Heart right ventricle (tissue), 16 donors: ENCODE measurements at regions of chr15 and their contacts with region 1.

Region 1: GRCh38 chr15:35519541-35520149 is 26.3 kb downstream of the DPH6 start:
- DNase-seq: peak in 1 of 2 donors; percentile 13
- ATAC-seq: peak in 5 of 8 donors; percentile 66 to 80 (median 72)
- H3K4me3 ChIP-seq: no peak overlapping the region
- H3K27ac ChIP-seq: no peak overlapping the region
- H3K4me1 ChIP-seq: peaks cover 0 to 29% (median 10%) of the 10 kb centered on the region in 9 donors
- H3K27me3 ChIP-seq: no peaks in the 10 kb centered on the region
- CTCF ChIP-seq: peak in 8 of 9 donors; percentile 56 to 86 (median 69)

Region 2: GRCh38 chr15:35206060-35206675 is 313.5 kb before region 1 on chr15:
- intact Hi-C with region 1: no loop called
- DNase-seq: no peak
- ATAC-seq: no peak
- H3K4me3 ChIP-seq: no peak overlapping the region
- H3K27ac ChIP-seq: no peak overlapping the region
- H3K4me1 ChIP-seq: peaks cover 0 to 8% (median 0%) of the 10 kb centered on the region in 9 donors
- H3K27me3 ChIP-seq: no peaks in the 10 kb centered on the region
- CTCF ChIP-seq: peak in 2 of 9 donors; percentile 25 to 27

Region 3: GRCh38 chr15:35674873-35675781 is 155.5 kb after region 1 on chr15:
- intact Hi-C with region 1: loop called in 1 of 10 experiments (anchors 5 kb)
- DNase-seq: peak in 1 of 2 donors; percentile 29
- ATAC-seq: peak in 4 of 8 donors; percentile 18 to 43 (median 30)
- H3K4me3 ChIP-seq: no peak overlapping the region
- H3K27ac ChIP-seq: peak overlapping the region; percentile 8 to 82 (median 49)
- H3K4me1 ChIP-seq: peaks cover 0 to 59% (median 41%) of the 10 kb centered on the region in 9 donors
- H3K27me3 ChIP-seq: no peaks in the 10 kb centered on the region
- CTCF ChIP-seq: no peak

Region 4: GRCh38 chr15:35697549-35698299 is 178.1 kb after region 1 on chr15:
- intact Hi-C with region 1: loop called in 1 of 10 experiments (anchors 10 kb)
- DNase-seq: no peak
- ATAC-seq: peak; percentile 26 to 89 (median 72)
- H3K4me3 ChIP-seq: no peak overlapping the region
- H3K27ac ChIP-seq: peak overlapping the region; percentile 2 to 76 (median 52)
- H3K4me1 ChIP-seq: peaks cover 1 to 55% (median 38%) of the 10 kb centered on the region in 9 donors
- H3K27me3 ChIP-seq: no peaks in the 10 kb centered on the region
- CTCF ChIP-seq: peak in 4 of 9 donors; percentile 18 to 44 (median 33)

Region 5: DNA sequence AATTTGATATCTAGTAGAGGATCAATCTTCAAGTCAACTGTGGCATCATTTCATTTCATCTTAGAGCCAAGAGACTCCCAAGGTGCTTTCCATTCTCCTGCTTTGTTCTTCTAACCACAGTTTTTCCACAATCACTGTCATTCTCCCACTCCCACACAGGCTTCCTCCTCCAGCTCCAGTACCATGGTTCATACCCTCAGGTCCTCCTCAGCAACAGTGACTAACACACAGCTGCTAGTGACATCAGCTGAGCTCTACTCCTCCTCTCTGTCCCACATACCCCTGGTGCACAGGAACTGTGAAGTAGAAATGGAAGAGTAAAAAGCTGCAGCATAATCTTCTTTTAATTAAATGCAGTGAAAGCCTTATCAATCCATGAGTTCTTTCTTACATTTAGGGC is 226.5 kb after region 1 on chr15:
- intact Hi-C with region 1: loop called in 4 of 10 experiments (anchors 5 to 10 kb)
- DNase-seq: no peak
- ATAC-seq: no peak
- H3K4me3 ChIP-seq: no peak overlapping the region
- H3K27ac ChIP-seq: no peak overlapping the region
- H3K4me1 ChIP-seq: peaks cover 0 to 1% (median 0%) of the 10 kb centered on the region in 9 donors
- H3K27me3 ChIP-seq: no peaks in the 10 kb centered on the region
- CTCF ChIP-seq: no peak

Region 6: DNA sequence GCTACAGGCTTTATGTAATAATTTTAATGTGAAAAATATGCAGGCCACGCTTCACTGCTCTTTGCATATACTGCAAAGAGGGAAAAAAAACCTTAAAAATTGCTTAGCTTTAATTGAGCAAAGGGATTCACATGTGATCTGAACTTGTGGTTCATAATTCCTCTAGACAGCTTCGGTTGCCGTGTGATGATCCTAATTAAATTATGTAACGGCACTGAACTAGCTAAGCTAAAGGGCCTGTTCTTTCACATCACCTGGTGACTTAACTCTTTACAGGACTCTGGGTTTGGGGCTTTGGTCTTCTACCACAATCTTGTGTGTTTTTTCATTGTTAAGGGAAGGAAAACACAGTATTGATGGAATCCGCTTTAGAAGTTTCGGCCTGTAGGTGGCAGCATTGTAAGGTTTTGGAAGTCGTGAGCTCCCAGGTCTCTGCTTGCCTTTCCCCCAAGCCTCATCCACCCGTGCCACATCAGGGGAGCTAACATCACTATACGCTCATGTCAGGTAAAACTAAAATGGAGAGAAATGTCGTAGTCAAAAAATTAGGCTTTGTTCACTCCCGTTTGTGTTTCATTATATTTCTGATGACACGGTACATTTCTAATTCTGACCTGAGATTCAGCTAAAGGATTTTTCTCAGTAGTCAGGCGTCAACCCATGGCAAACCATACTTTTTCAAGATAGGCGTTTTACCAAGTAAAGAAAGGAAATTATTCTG is 231.9 kb after region 1 on chr15:
- intact Hi-C with region 1: loop called in 4 of 10 experiments (anchors 5 to 10 kb)
- DNase-seq: peak; percentile 25 to 80
- ATAC-seq: peak; percentile 55 to 94 (median 87)
- H3K4me3 ChIP-seq: peak overlapping the region in 2 of 10 donors; percentile 8 to 14
- H3K27ac ChIP-seq: no peak overlapping the region
- H3K4me1 ChIP-seq: peaks cover 0 to 12% (median 2%) of the 10 kb centered on the region in 9 donors
- H3K27me3 ChIP-seq: no peaks in the 10 kb centered on the region
- CTCF ChIP-seq: peak; percentile 59 to 88 (median 81)

Region 7: DNA sequence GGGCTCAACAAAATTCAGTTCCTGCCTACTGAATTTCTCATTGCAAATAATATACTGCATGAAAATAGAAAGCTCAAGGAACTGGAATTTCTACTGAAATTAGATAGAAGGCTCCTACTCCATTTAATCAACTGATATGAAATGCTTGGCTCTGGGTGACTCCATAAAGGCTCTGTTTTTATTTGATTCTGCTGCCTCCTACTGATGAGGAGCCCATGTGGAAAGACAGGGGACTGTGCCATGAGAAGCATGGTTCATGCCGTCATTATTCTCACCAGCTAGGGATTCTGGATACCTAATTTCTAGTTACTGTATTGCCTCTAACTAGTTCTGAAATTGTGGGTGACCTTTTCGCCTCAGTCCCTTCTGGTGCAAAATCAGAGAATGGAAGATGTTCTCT is 392.6 kb after region 1 on chr15:
- intact Hi-C with region 1: loop called in 5 of 10 experiments (anchors 5 to 10 kb)
- DNase-seq: no peak
- ATAC-seq: peak in 5 of 8 donors; percentile 59 to 89 (median 71)
- H3K4me3 ChIP-seq: no peak overlapping the region
- H3K27ac ChIP-seq: no peak overlapping the region
- H3K4me1 ChIP-seq: peaks cover 0 to 14% (median 0%) of the 10 kb centered on the region in 9 donors
- H3K27me3 ChIP-seq: no peaks in the 10 kb centered on the region
- CTCF ChIP-seq: peak; percentile 13 to 56 (median 36)

Region 8: DNA sequence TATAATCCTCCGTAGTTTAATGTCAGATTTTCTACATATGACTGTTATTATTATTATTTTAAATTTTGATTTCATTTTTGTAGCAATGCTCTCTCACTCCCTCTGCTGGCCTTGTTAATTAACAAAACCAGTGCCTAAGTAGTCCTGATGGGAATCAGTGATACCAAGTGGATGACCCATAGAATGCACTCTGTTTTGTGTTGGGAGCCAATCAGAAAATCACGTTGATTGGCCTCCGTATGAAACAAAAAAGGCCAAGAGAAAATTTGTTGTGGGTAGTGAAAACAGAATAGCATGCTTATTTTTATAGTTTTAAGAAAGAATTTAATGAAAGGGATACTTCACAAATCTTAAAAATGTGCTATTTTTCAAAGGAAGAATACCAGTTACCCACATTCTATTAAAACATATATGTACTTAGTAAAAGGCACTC is 1615.1 kb after region 1 on chr15:
- intact Hi-C with region 1: loop called in 3 of 10 experiments (anchors 10 kb)
- DNase-seq: no peak
- ATAC-seq: peak in 2 of 8 donors; percentile 65 to 71
- H3K4me3 ChIP-seq: no peak overlapping the region
- H3K27ac ChIP-seq: no peak overlapping the region
- H3K4me1 ChIP-seq: peaks cover 0 to 5% (median 0%) of the 10 kb centered on the region in 9 donors
- H3K27me3 ChIP-seq: peaks cover 0 to 3% (median 0%) of the 10 kb centered on the region in 7 donors
- CTCF ChIP-seq: peak; percentile 7 to 80 (median 68)